ENCODE measurements at regions of chr2 and their contacts with region 1.

Region 1: GRCh38 chr2:20172273-20173055 is 52.5 kb downstream of the SDC1 start:
- DNase-seq: peak; percentile 92
- H3K4me3 ChIP-seq: peak overlapping the region in 1 of 3 experiments; percentile 2
- H3K27ac ChIP-seq: peak overlapping the region; percentile 28
- H3K4me1 ChIP-seq: peaks cover 30% of the 10 kb centered on the region
- H3K27me3 ChIP-seq: no peaks in the 10 kb centered on the region
- CTCF ChIP-seq: no peak

Region 2: GRCh38 chr2:20157193-20157891 is 15.1 kb before region 1 on chr2:
- CTCF ChIA-PET with region 1: no interaction called
- dilution Hi-C with region 1: no loop called
- in situ Hi-C with region 1: no loop called
- intact Hi-C with region 1: no loop called
- DNase-seq: no peak
- H3K4me3 ChIP-seq: no peak overlapping the region
- H3K27ac ChIP-seq: no peak overlapping the region
- H3K4me1 ChIP-seq: peaks cover 17% of the 10 kb centered on the region
- H3K27me3 ChIP-seq: no peaks in the 10 kb centered on the region
- CTCF ChIP-seq: no peak

Region 3: GRCh38 chr2:20207051-20207450 is 34.6 kb after region 1 on chr2:
- CTCF ChIA-PET with region 1: no interaction called
- dilution Hi-C with region 1: loop called (anchors 5 kb)
- in situ Hi-C with region 1: no loop called
- intact Hi-C with region 1: no loop called
- DNase-seq: no peak
- H3K4me3 ChIP-seq: no peak overlapping the region
- H3K27ac ChIP-seq: peak overlapping the region; percentile 69
- H3K4me1 ChIP-seq: peaks cover 85% of the 10 kb centered on the region
- H3K27me3 ChIP-seq: no peaks in the 10 kb centered on the region
- CTCF ChIP-seq: no peak

Measured in mammary epithelial cell (primary cell).